ENCODE measurements at regions of chr1 and their contacts with region 1.

Region 1: GRCh38 chr1:200279810-200280411 is 129.9 kb downstream of the ZNF281 start:
- DNase-seq: no peak
- H3K4me3 ChIP-seq: no peak overlapping the region
- CTCF ChIP-seq: peak; percentile 59

Region 2: DNA sequence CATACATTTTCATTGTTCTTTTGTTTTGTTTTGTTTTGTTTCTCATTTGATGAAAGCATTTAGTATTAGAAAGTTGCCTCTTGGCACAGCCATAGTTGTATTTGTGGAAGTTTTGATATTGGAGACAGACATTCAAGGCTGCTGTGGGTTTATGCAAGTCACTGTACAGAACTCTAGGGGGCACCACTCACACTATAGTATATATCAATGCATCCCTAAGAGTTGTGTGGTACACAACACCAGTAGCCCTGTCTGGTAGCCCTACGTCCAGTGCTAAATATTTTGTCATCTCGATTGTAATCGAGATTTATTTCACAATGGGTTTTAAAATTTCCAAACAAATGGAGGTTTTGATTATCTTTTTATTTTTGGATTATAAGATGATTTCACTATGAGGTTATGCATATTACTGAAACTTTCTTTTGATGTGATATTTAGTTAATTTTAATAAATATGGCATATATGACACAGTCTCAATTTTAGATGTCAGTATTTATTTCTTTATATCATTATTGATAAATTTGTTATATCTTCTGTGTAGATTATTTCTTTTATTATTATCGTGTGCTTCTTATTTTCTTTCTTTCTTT is 140.2 kb before region 1 on chr1:
- CTCF ChIA-PET with region 1: interaction called, 20 read pairs
- POLR2A ChIA-PET with region 1: no interaction called
- DNase-seq: peak; percentile 26
- H3K4me3 ChIP-seq: no peak overlapping the region
- CTCF ChIP-seq: peak; percentile 72

Region 3: DNA sequence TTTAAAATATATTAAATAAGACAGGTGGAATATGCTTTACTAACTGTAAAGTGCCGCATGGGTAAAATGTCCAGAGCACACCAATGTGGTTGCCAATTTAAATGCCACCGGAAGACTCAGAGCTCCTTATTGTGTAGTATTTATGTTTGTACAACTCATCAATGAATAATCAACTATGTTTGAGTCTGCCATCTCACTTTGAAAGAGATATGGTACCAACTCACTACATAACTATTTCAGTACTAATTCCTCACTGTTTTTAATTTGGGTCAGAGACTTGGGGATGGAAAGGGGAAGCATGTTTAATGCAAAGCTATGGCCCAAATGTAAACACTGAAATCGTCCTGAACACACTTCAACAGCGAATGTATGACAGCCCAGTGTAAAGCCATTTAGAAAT is 107.6 kb before region 1 on chr1:
- CTCF ChIA-PET with region 1: no interaction called
- POLR2A ChIA-PET with region 1: no interaction called
- DNase-seq: no peak
- H3K4me3 ChIP-seq: no peak overlapping the region
- CTCF ChIP-seq: no peak

Region 4: GRCh38 chr1:200206340-200206739 is 73.6 kb before region 1 on chr1:
- CTCF ChIA-PET with region 1: no interaction called
- POLR2A ChIA-PET with region 1: no interaction called
- DNase-seq: peak; percentile 47
- H3K4me3 ChIP-seq: no peak overlapping the region
- CTCF ChIP-seq: no peak

Region 5: GRCh38 chr1:200269256-200269655 is 10.7 kb before region 1 on chr1:
- CTCF ChIA-PET with region 1: interaction called, 41 read pairs
- POLR2A ChIA-PET with region 1: no interaction called
- DNase-seq: no peak
- H3K4me3 ChIP-seq: no peak overlapping the region
- CTCF ChIP-seq: no peak

Region 6: GRCh38 chr1:200471739-200472138 is 191.8 kb after region 1 on chr1:
- CTCF ChIA-PET with region 1: no interaction called
- POLR2A ChIA-PET with region 1: no interaction called
- DNase-seq: no peak
- H3K4me3 ChIP-seq: no peak overlapping the region
- CTCF ChIP-seq: no peak

Region 7: DNA sequence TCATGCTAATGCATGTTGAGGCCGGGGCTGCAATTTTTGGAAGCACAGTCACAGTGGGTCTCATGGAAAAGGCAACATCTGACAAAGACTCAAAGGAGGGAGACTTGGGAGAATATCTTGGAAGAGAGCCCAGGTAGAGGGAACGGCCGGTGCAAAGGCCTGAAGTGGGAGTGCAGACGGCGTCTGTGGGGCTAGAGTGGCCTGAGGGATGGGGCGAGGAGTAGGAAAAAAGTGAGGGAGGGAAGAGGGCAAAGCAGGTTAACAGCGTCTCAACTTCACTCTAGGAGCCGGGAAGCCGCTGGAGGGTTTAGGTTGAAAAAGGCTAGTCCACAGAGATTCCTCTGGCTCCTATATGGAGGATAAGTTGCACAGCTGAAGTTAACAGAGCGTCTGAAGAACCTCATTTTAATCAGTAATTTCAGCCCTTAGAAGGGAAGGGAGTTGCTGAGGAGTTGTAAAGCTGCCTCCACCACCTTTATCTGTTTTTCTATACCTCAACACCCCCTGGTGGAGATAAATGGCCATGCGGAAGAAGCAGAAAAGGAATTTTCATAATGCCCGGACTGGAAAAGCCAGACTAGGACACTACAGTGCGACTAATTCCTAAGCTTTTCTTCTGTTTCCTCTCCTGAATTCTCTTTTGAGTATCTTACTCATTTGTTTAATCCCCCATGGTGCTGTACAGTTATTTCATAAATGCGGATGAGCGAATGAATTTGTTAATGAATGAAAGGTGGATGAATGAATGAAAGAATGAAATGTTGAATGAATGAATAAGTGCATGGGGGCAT is 208.7 kb after region 1 on chr1:
- CTCF ChIA-PET with region 1: interaction called, 47 read pairs
- POLR2A ChIA-PET with region 1: no interaction called
- DNase-seq: peak; percentile 51
- H3K4me3 ChIP-seq: no peak overlapping the region
- CTCF ChIP-seq: peak; percentile 68